WTC11 (cell line): ENCODE measurements at regions of chr1 and their contacts with region 1.

Region 1: GRCh38 chr1:155063550-155064110 is at the start of gene EFNA4:
- DNase-seq: peak; percentile 93
- ATAC-seq: peak; percentile 74
- H3K4me3 Mint-ChIP-seq: peak within 1 kb of the TSS; percentile 91
- H3K27ac Mint-ChIP-seq: peak within 1 kb of the TSS; percentile 98
- H3K4me1 Mint-ChIP-seq: peaks cover 19% of the 10 kb centered on the region
- H3K27me3 Mint-ChIP-seq: no peaks in the 10 kb centered on the region
- CTCF ChIP-seq: no peak
- total RNA-seq, gene EFNA4: 19.5 to 22.7 TPM (median 22.3 TPM) in 3 replicates

Region 2: DNA sequence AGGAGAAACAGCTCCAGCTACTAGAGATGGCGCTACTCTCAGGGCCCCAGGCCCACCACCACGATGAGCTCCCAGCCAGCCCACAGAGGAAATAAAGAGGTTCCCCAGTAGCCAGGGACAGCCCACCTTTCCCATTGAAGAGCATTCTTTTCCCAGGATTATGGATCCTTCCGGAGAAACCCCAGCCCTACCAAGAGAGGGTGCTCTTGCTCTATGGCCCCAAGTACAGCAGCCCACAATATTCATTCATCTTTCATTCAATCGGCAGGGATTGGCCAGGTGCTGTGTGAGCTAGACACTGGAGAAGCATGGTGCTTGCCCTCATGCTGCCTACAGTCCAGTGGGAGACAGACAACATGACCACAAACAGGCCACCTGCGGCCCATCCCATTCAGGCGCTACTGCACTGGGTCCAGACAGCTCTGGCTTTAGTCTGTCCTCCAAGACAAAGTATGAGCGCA is 157.0 kb before region 1 on chr1:
- CTCF ChIA-PET with region 1: interaction called, 10 read pairs
- POLR2A ChIA-PET with region 1: no interaction called
- DNase-seq: peak; percentile 15
- ATAC-seq: peak; percentile 81
- H3K4me3 Mint-ChIP-seq: no peak overlapping the region
- H3K27ac Mint-ChIP-seq: no peak overlapping the region
- H3K4me1 Mint-ChIP-seq: no peaks in the 10 kb centered on the region
- H3K27me3 Mint-ChIP-seq: peaks cover 8% of the 10 kb centered on the region
- CTCF ChIP-seq: no peak

Region 3: DNA sequence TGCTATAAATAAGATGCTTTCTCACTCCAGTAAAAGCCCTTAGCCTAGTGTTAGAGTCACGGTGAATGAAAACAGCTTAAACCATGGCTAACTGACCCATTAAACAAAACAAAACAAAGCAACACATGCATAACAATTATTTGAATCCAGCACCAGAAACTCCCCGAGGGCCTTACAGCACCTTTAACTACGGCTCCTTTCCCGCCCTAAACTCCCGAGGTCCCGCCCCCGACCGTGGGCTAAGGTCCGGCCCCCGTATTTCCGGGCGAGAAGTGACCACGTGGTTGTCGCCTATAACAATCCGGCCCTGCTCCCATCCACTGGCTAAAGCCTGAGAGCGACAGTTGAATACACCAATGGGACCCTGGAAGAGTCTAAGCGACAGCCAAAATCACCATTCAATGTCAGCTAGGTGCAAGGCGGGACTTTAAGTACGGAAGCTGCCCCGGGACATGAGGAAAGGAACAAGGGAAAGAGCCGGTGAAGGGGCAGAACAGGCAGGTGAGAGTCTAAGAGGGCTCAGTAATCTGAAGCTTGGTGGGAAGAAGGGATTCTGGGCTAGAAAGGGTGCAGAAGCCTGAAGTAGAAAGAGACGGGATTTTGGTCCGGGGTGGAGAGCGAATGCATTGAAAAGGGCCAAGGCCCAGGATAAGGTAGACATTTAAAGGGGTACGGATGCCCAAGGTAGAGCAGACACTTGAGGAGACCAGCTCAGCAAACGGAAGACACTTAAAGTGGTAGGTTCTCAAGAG is 80.6 kb before region 1 on chr1 and contains the start of gene FLAD1:
- CTCF ChIA-PET with region 1: interaction called, 13 read pairs
- POLR2A ChIA-PET with region 1: no interaction called
- DNase-seq: peak; percentile 98
- ATAC-seq: peak; percentile 99
- H3K4me3 Mint-ChIP-seq: no peak within 1 kb of the TSS
- H3K27ac Mint-ChIP-seq: peak within 1 kb of the TSS; percentile 70; the same call in 1 of the 2 replicates
- H3K4me1 Mint-ChIP-seq: peaks cover 10% of the 10 kb centered on the region
- H3K27me3 Mint-ChIP-seq: no peaks in the 10 kb centered on the region
- CTCF ChIP-seq: no peak
- total RNA-seq, gene FLAD1: 71.1 to 88.3 TPM (median 71.2 TPM) in 3 replicates

Region 4: DNA sequence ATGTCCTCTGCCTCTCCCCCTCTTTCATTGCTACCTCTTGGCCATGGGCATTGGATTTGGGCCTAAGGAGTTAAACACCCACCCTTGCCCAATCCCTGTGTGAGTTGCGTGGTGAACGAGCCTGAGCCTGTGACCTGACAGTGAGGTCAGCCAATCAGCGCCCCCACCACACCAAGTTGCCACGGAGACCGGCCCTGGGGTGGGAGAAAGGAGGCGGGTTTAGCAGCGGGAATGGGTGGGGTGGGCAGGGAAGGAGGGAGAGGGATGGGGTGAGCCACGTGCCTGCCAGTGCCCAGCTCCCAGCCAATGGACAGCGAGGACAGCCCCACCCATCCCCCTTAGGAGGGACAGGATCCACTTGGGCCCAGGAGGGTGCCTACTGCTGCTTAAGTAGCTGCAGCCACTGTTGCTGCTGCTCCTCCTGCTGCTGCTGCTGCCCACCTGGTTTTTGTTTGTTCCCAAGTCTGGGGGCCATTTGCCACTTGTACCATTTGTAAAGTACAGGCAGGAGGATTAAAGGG is 51.5 kb before region 1 on chr1:
- CTCF ChIA-PET with region 1: interaction called, 73 read pairs
- POLR2A ChIA-PET with region 1: interaction called, 6 read pairs
- DNase-seq: peak; percentile 88
- ATAC-seq: peak; percentile 78
- H3K4me3 Mint-ChIP-seq: peak overlapping the region; percentile 45
- H3K27ac Mint-ChIP-seq: peak overlapping the region; percentile 95
- H3K4me1 Mint-ChIP-seq: peaks cover 49% of the 10 kb centered on the region
- H3K27me3 Mint-ChIP-seq: no peaks in the 10 kb centered on the region
- CTCF ChIP-seq: no peak

Region 5: GRCh38 chr1:155044812-155045690 is 18.6 kb before region 1 on chr1:
- CTCF ChIA-PET with region 1: interaction called, 176 read pairs
- POLR2A ChIA-PET with region 1: no interaction called
- DNase-seq: peak; percentile 77
- ATAC-seq: peak; percentile 92
- H3K4me3 Mint-ChIP-seq: no peak overlapping the region
- H3K27ac Mint-ChIP-seq: no peak overlapping the region
- H3K4me1 Mint-ChIP-seq: peaks cover 35% of the 10 kb centered on the region
- H3K27me3 Mint-ChIP-seq: no peaks in the 10 kb centered on the region; the same call in none of the 2 replicates
- CTCF ChIP-seq: no peak; the same call in 1 of the 2 replicates

Region 6: GRCh38 chr1:155084722-155085503 is 21.3 kb after region 1 on chr1:
- CTCF ChIA-PET with region 1: interaction called, 156 read pairs
- POLR2A ChIA-PET with region 1: interaction called, 10 read pairs
- DNase-seq: peak; percentile 97
- ATAC-seq: peak; percentile 67
- H3K4me3 Mint-ChIP-seq: peak overlapping the region; percentile 95
- H3K27ac Mint-ChIP-seq: peak overlapping the region; percentile 74
- H3K4me1 Mint-ChIP-seq: peaks cover 35% of the 10 kb centered on the region
- H3K27me3 Mint-ChIP-seq: peaks cover 45% of the 10 kb centered on the region
- CTCF ChIP-seq: peak; percentile 90

Region 7: DNA sequence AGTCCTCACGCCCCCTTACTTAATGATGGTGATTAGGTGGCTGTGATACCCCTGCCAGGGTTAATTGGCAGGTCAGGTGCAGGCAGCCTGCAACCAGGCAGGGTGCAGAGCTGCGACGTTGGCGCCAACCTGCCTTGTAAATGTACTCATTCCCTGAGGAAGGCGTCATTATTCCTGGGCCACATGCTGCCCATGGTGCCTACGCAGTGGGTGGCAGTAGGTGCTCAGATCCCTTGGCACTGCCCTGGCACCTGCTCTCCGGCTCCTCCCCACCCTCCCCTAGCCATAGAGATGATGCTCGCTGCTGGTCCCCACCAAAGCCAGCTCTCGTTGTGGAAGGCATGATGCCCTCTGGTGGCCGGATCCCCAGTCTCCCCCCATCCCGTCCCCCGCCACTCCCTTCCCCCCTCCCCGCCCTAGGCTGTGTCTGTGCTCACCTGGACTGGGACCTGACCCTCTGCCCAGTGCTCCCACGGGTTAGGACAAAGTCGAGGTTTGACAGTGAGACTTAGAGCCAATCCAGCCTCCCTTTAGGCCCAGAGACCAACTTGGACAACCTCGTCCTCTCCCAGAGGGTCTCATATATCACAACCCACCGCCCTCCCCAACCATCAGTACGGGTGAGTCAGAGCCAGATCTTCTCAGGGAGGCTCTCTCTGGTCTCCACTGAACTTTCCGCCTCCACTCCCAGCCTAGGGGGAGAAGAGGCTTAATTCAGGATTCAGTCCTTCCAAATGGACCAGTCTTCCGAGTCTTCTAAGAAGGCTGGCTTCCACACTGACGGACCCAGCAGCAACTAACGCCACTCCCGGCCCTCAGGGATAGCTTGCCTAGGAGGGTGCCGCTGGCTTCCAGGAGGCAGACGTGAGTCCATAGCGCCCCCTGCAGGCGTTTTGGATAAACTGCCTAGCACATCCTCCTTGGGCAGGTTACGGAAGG is 103.8 kb after region 1 on chr1:
- CTCF ChIA-PET with region 1: interaction called, 57 read pairs
- POLR2A ChIA-PET with region 1: interaction called, 3 read pairs
- DNase-seq: peak; percentile 95
- ATAC-seq: peak; percentile 75
- H3K4me3 Mint-ChIP-seq: peak overlapping the region; percentile 89
- H3K27ac Mint-ChIP-seq: peak overlapping the region; percentile 90
- H3K4me1 Mint-ChIP-seq: peaks cover 24% of the 10 kb centered on the region
- H3K27me3 Mint-ChIP-seq: no peaks in the 10 kb centered on the region; the same call in 1 of the 2 replicates
- CTCF ChIP-seq: peak; percentile 94

Region 8: DNA sequence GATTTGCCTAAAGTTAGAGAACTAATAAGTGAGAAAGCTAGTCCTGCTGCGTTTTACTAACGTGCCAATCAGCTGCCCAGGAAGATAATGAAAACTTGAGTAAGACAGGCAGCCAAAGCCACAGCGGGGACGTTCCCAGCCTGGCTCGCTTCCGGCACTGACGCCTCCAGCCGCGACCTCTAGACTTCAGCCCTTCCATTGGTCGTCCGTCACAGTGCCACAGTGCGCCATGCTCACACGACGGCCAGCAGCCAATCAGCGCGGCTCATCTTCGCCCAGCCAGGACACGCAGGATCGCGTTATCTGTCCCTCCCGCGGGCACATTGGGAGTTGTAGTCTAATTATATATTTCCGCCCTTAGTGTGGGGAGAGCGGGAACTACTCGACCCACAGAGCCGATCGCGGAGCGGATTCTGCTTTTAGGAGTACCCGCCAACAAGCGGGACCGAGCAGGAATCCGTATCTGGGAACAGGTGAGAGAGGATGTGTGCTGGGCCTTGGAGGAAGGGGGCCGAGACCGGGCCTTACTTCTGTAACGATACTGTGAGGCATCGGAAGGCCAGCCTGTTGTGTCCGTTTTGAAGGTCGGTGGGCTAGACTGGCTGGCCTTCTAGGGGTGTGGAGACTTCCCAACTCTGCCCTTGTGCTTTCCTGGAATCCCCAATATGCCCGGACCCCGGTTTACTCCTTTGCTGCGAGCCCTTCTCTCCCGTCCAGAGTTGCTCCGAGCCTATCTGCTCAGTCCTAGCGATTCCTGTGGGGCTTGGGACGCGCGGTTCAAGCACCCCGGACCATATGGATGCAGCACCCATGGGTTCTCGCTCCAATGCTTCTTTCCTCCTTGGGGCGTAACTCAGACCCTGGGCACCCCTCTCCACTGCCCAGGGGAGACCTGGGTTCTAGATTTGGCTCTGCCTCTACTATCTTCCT is 245.1 kb after region 1 on chr1 and contains the start of gene FDPS:
- CTCF ChIA-PET with region 1: no interaction called
- POLR2A ChIA-PET with region 1: no interaction called
- DNase-seq: peak; percentile 97
- ATAC-seq: peak; percentile 97
- H3K4me3 Mint-ChIP-seq: peak within 1 kb of the TSS; percentile 97
- H3K27ac Mint-ChIP-seq: peak within 1 kb of the TSS; percentile 99
- H3K4me1 Mint-ChIP-seq: peaks cover 22% of the 10 kb centered on the region
- H3K27me3 Mint-ChIP-seq: no peaks in the 10 kb centered on the region
- CTCF ChIP-seq: no peak
- total RNA-seq, gene FDPS: 342 to 366 TPM (median 354 TPM) in 3 replicates